ENCODE measurements at regions of chr5 and their contacts with region 1.

Region 1: DNA sequence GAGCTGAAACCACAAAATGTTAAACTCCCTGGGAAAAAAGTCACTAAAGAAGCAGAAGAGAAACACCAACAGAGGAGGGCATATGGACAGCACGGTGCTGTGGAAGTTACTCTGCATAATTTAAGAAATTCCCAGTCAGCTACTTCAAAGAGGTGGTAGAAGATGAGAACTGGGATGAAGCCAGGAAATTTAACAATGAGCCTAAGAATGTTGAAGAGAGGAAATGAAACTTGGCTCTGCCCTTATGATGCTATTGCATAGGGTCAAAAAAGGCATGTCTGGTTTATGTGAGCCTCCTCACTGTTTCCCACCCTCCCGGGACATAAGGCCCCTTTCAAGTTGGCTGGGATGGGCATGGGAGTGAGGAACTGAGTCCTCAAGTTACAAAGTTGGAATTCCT is 25.4 kb upstream of the SNX18 start:
- DNase-seq: no peak
- H3K4me3 ChIP-seq: no peak overlapping the region
- H3K27ac ChIP-seq: no peak overlapping the region
- H3K4me1 ChIP-seq: no peaks in the 10 kb centered on the region
- H3K27me3 ChIP-seq: peaks cover 3 to 19% of the 10 kb centered on the region in 2 experiments
- CTCF ChIP-seq: no peak
- POLR2A ChIP-seq: no peak

Region 2: DNA sequence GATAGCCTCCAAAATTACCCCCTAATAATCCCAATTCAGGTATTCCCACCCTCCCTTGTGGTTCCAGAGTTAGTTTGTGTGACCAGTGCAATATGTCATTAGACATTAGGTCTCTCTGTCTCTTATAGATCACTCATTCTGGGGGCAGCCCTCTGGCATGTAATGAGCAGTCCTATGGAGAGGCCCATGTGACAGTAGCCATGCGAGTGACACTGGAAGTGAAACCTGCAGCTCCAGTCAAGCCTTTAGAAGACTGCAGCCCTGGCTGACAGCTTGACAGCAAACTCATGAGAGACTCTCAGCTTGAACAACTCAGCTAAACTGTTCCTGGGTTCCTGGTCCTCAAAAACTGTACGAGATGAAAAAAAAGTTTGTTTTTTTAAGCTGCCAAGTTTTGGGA is 90.7 kb before region 1 on chr5:
- CTCF ChIA-PET with region 1: no interaction called
- POLR2A ChIA-PET with region 1: no interaction called
- dilution Hi-C with region 1: no loop called
- intact Hi-C with region 1: no loop called
- DNase-seq: no peak
- H3K4me3 ChIP-seq: no peak overlapping the region
- H3K27ac ChIP-seq: no peak overlapping the region
- H3K4me1 ChIP-seq: no peaks in the 10 kb centered on the region
- H3K27me3 ChIP-seq: peaks cover 4% of the 10 kb centered on the region in 2 experiments
- CTCF ChIP-seq: no peak
- POLR2A ChIP-seq: no peak

Region 3: GRCh38 chr5:54421976-54422375 is 70.2 kb before region 1 on chr5:
- CTCF ChIA-PET with region 1: interaction called, 12 read pairs
- POLR2A ChIA-PET with region 1: no interaction called
- dilution Hi-C with region 1: no loop called
- intact Hi-C with region 1: no loop called
- DNase-seq: no peak
- H3K4me3 ChIP-seq: no peak overlapping the region
- H3K27ac ChIP-seq: no peak overlapping the region
- H3K4me1 ChIP-seq: no peaks in the 10 kb centered on the region
- H3K27me3 ChIP-seq: peaks cover 9 to 18% of the 10 kb centered on the region in 2 experiments
- CTCF ChIP-seq: no peak
- POLR2A ChIP-seq: no peak

Region 4: GRCh38 chr5:54457094-54457862 is 34.9 kb before region 1 on chr5:
- CTCF ChIA-PET with region 1: interaction called, 10 read pairs
- POLR2A ChIA-PET with region 1: no interaction called
- dilution Hi-C with region 1: no loop called
- intact Hi-C with region 1: no loop called
- DNase-seq: no peak
- H3K4me3 ChIP-seq: no peak overlapping the region
- H3K27ac ChIP-seq: no peak overlapping the region
- H3K4me1 ChIP-seq: no peaks in the 10 kb centered on the region
- H3K27me3 ChIP-seq: peaks cover 9 to 10% of the 10 kb centered on the region in 2 experiments
- CTCF ChIP-seq: no peak
- POLR2A ChIP-seq: no peak

Region 5: GRCh38 chr5:54480296-54480695 is 11.9 kb before region 1 on chr5:
- CTCF ChIA-PET with region 1: interaction called, 13 read pairs
- POLR2A ChIA-PET with region 1: no interaction called
- dilution Hi-C with region 1: no loop called
- intact Hi-C with region 1: no loop called
- DNase-seq: no peak
- H3K4me3 ChIP-seq: no peak overlapping the region
- H3K27ac ChIP-seq: no peak overlapping the region
- H3K4me1 ChIP-seq: no peaks in the 10 kb centered on the region
- H3K27me3 ChIP-seq: peaks cover 12% of the 10 kb centered on the region in 2 experiments
- CTCF ChIP-seq: no peak
- POLR2A ChIP-seq: no peak

Region 6: GRCh38 chr5:54905943-54906537 is 413.9 kb after region 1 on chr5:
- CTCF ChIA-PET with region 1: no interaction called
- POLR2A ChIA-PET with region 1: no interaction called
- dilution Hi-C with region 1: no loop called
- intact Hi-C with region 1: no loop called
- DNase-seq: peak; percentile 91
- H3K4me3 ChIP-seq: peak overlapping the region in 1 of 3 experiments; percentile 7
- H3K27ac ChIP-seq: no peak overlapping the region
- H3K4me1 ChIP-seq: peaks cover 39% of the 10 kb centered on the region
- H3K27me3 ChIP-seq: no peaks in the 10 kb centered on the region
- CTCF ChIP-seq: peak; percentile 59 to 63
- POLR2A ChIP-seq: no peak